B cell (primary cell): ENCODE measurements at regions of chr2 and their contacts with region 1.

Region 1: GRCh38 chr2:117814417-117815264 is at the start of gene DDX18:
- DNase-seq: peak; percentile 100
- ATAC-seq: peak; percentile 84
- H3K4me3 ChIP-seq: peak within 1 kb of the TSS; percentile 60 to 85 (median 68)
- H3K4me3 Mint-ChIP-seq: peak within 1 kb of the TSS; percentile 88
- H3K27ac ChIP-seq: peak within 1 kb of the TSS; percentile 96 to 99
- H3K27ac Mint-ChIP-seq: peak within 1 kb of the TSS; percentile 95
- H3K4me1 ChIP-seq: peaks cover 24 to 25% of the 10 kb centered on the region in 2 donors
- H3K4me1 Mint-ChIP-seq: peaks cover 46% of the 10 kb centered on the region
- H3K27me3 ChIP-seq: no peaks in the 10 kb centered on the region
- H3K27me3 Mint-ChIP-seq: no peaks in the 10 kb centered on the region
- CTCF ChIP-seq: peak; percentile 99
- total RNA-seq, gene DDX18: 94.7 and 98.0 TPM in 2 replicates

Region 2: GRCh38 chr2:117875786-117876185 is 61.1 kb after region 1 on chr2:
- CTCF ChIA-PET with region 1: no interaction called
- POLR2A ChIA-PET with region 1: no interaction called
- intact Hi-C with region 1: no loop called
- DNase-seq: no peak
- ATAC-seq: no peak
- H3K4me3 ChIP-seq: no peak overlapping the region
- H3K4me3 Mint-ChIP-seq: no peak overlapping the region
- H3K27ac ChIP-seq: no peak overlapping the region
- H3K27ac Mint-ChIP-seq: no peak overlapping the region
- H3K4me1 ChIP-seq: no peaks in the 10 kb centered on the region
- H3K4me1 Mint-ChIP-seq: no peaks in the 10 kb centered on the region
- H3K27me3 ChIP-seq: peaks cover 0 to 8% (median 4%) of the 10 kb centered on the region in 4 experiments
- H3K27me3 Mint-ChIP-seq: peaks cover 34% of the 10 kb centered on the region
- CTCF ChIP-seq: no peak

Region 3: GRCh38 chr2:117936871-117937428 is 122.3 kb after region 1 on chr2:
- CTCF ChIA-PET with region 1: interaction called, 3 read pairs
- POLR2A ChIA-PET with region 1: no interaction called
- intact Hi-C with region 1: loop called (anchors 10 kb)
- DNase-seq: no peak
- ATAC-seq: no peak
- H3K4me3 ChIP-seq: no peak overlapping the region
- H3K4me3 Mint-ChIP-seq: no peak overlapping the region
- H3K27ac ChIP-seq: no peak overlapping the region
- H3K27ac Mint-ChIP-seq: no peak overlapping the region
- H3K4me1 ChIP-seq: no peaks in the 10 kb centered on the region
- H3K4me1 Mint-ChIP-seq: no peaks in the 10 kb centered on the region
- H3K27me3 ChIP-seq: no peaks in the 10 kb centered on the region
- H3K27me3 Mint-ChIP-seq: no peaks in the 10 kb centered on the region
- CTCF ChIP-seq: no peak

Region 4: DNA sequence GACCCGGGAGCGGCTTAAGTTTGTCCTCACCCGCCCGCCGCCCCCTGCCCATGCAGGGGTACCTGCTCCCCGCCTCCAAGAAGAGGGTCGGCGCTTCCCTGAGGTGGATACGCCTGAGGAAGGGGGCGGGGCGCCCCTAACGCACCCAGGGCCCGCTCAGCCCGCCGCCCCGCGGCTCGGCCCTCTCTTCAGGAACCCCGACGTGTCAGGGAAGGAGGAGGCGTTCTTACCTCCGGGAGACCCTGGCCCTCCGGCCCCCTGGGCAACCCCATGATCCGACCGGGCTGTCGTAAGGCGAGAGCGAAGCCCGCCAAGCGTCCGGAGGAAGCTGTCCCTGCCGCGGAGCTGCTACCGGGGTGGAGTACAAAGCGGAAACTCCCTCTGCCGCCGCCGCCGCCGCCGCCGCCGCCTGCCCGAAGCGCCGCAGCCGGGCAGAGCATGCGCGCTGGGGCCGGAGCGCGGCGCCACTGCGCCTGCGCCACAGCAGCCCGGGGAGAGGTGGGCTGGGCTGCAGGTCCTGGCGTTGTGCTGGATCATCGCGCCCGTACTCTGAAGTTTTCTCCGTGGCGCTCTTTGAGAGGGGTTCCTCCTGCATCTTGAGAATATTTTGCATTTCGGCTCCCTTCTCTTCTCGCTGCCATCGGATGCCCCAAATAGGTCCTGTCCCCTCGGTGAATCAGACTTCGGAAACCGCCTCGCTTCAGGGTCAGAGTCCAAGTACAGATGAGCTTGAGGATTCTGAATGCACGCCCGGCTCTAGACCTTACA is 199.3 kb after region 1 on chr2 and contains the start of gene CCDC93:
- CTCF ChIA-PET with region 1: interaction called, 62 read pairs
- POLR2A ChIA-PET with region 1: interaction called, 4 read pairs
- intact Hi-C with region 1: loop called (anchors 1 kb)
- DNase-seq: peak; percentile 94
- ATAC-seq: peak; percentile 86
- H3K4me3 ChIP-seq: peak within 1 kb of the TSS; percentile 82 to 99 (median 96)
- H3K4me3 Mint-ChIP-seq: peak within 1 kb of the TSS; percentile 97
- H3K27ac ChIP-seq: peak within 1 kb of the TSS; percentile 90 to 97
- H3K27ac Mint-ChIP-seq: peak within 1 kb of the TSS; percentile 92
- H3K4me1 ChIP-seq: peaks cover 21 to 24% of the 10 kb centered on the region in 2 donors
- H3K4me1 Mint-ChIP-seq: peaks cover 34% of the 10 kb centered on the region
- H3K27me3 ChIP-seq: peaks cover 0 to 9% (median 0%) of the 10 kb centered on the region in 4 experiments
- H3K27me3 Mint-ChIP-seq: peaks cover 9% of the 10 kb centered on the region
- CTCF ChIP-seq: no peak
- total RNA-seq, gene CCDC93: 79.6 and 86.7 TPM in 2 replicates

Region 5: DNA sequence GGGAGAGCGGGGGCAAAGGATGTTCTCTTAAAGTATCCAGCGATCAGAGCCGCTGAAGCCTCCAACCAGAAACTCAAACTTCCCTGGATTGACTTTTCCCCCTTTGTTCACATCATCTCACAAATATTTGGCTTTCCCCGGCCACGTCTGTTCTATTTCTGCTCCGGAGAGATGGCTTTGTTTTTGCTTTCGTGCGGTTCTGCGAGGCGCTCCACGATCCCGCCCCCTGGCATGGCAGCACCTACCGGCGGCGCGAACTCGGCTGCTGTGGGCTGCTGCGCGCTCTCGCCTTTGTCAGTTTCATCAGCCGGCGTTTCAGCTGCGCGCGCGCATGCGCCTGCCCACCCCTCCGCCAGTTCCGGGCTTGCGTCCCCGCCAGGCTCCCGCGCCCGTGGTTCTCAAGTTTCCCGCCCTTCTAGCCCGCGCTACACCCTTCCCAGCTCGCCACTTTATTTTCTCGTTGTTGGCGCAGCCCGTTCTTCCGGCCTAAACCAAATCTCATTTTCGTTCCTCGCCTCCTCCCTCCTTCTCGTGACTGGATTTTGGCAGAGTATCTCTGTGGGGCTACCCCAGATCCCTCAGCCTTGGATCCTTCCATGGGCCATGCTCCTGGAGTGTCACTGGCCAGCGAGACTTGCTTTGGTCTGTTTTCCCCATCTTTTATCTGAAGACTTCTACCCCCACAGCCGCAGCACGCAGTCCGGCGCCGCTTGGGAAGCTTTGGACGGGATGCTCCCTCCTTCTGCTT is 371.6 kb after region 1 on chr2:
- CTCF ChIA-PET with region 1: no interaction called
- POLR2A ChIA-PET with region 1: no interaction called
- intact Hi-C with region 1: loop called (anchors 1 kb)
- DNase-seq: peak; percentile 89
- ATAC-seq: peak; percentile 93
- H3K4me3 ChIP-seq: peak overlapping the region; percentile 60 to 90 (median 80)
- H3K4me3 Mint-ChIP-seq: peak overlapping the region; percentile 90
- H3K27ac ChIP-seq: peak overlapping the region; percentile 56 to 75
- H3K27ac Mint-ChIP-seq: peak overlapping the region; percentile 89
- H3K4me1 ChIP-seq: peaks cover 0 to 14% of the 10 kb centered on the region in 2 donors
- H3K4me1 Mint-ChIP-seq: peaks cover 17% of the 10 kb centered on the region
- H3K27me3 ChIP-seq: peaks cover 0 to 3% (median 2%) of the 10 kb centered on the region in 4 experiments
- H3K27me3 Mint-ChIP-seq: peaks cover 6% of the 10 kb centered on the region
- CTCF ChIP-seq: no peak